CD8-positive, alpha-beta T cell (primary cell): ENCODE measurements at regions of chr19 and their contacts with region 1.

Region 1: GRCh38 chr19:12139885-12140547 is at the start of gene ZNF20:
- DNase-seq: peak; percentile 71 to 92 (median 89)
- ATAC-seq: peak; percentile 86
- H3K4me3 ChIP-seq: peak within 1 kb of the TSS; percentile 85 to 94
- H3K4me3 Mint-ChIP-seq: peak within 1 kb of the TSS; percentile 84
- H3K27ac ChIP-seq: peak within 1 kb of the TSS; percentile 44 to 50
- H3K27ac Mint-ChIP-seq: peak within 1 kb of the TSS; percentile 67
- H3K4me1 ChIP-seq: peaks cover 16% of the 10 kb centered on the region
- H3K4me1 Mint-ChIP-seq: peaks cover 30% of the 10 kb centered on the region
- H3K27me3 ChIP-seq: no peaks in the 10 kb centered on the region
- H3K27me3 Mint-ChIP-seq: no peaks in the 10 kb centered on the region
- CTCF ChIP-seq: no peak
- total RNA-seq, gene ZNF20: 0.95 to 1.00 TPM

Region 2: GRCh38 chr19:11699931-11700794 is 439.9 kb before region 1 on chr19:
- CTCF ChIA-PET with region 1: no interaction called
- POLR2A ChIA-PET with region 1: no interaction called
- intact Hi-C with region 1: loop called in 1 of 2 experiments (anchors 1 kb)
- DNase-seq: peak in 3 of 9 experiments; percentile 5 to 48 (median 32)
- ATAC-seq: no peak
- H3K4me3 ChIP-seq: no peak overlapping the region
- H3K4me3 Mint-ChIP-seq: no peak overlapping the region
- H3K27ac ChIP-seq: no peak overlapping the region
- H3K27ac Mint-ChIP-seq: no peak overlapping the region
- H3K4me1 ChIP-seq: peaks cover 1% of the 10 kb centered on the region
- H3K4me1 Mint-ChIP-seq: no peaks in the 10 kb centered on the region
- H3K27me3 ChIP-seq: peaks cover 0 to 2% of the 10 kb centered on the region in 2 experiments
- H3K27me3 Mint-ChIP-seq: peaks cover 8% of the 10 kb centered on the region
- CTCF ChIP-seq: peak; percentile 69

Region 3: GRCh38 chr19:11881151-11881800 is 258.7 kb before region 1 on chr19:
- CTCF ChIA-PET with region 1: interaction called, 24 read pairs
- POLR2A ChIA-PET with region 1: no interaction called
- intact Hi-C with region 1: loop called (anchors 1 kb)
- DNase-seq: peak; percentile 33 to 79 (median 66)
- ATAC-seq: peak; percentile 62
- H3K4me3 ChIP-seq: peak overlapping the region in 1 of 2 experiments; percentile 33
- H3K4me3 Mint-ChIP-seq: no peak overlapping the region
- H3K27ac ChIP-seq: no peak overlapping the region
- H3K27ac Mint-ChIP-seq: no peak overlapping the region
- H3K4me1 ChIP-seq: peaks cover 3% of the 10 kb centered on the region
- H3K4me1 Mint-ChIP-seq: peaks cover 2% of the 10 kb centered on the region
- H3K27me3 ChIP-seq: no peaks in the 10 kb centered on the region
- H3K27me3 Mint-ChIP-seq: no peaks in the 10 kb centered on the region
- CTCF ChIP-seq: peak; percentile 53

Region 4: DNA sequence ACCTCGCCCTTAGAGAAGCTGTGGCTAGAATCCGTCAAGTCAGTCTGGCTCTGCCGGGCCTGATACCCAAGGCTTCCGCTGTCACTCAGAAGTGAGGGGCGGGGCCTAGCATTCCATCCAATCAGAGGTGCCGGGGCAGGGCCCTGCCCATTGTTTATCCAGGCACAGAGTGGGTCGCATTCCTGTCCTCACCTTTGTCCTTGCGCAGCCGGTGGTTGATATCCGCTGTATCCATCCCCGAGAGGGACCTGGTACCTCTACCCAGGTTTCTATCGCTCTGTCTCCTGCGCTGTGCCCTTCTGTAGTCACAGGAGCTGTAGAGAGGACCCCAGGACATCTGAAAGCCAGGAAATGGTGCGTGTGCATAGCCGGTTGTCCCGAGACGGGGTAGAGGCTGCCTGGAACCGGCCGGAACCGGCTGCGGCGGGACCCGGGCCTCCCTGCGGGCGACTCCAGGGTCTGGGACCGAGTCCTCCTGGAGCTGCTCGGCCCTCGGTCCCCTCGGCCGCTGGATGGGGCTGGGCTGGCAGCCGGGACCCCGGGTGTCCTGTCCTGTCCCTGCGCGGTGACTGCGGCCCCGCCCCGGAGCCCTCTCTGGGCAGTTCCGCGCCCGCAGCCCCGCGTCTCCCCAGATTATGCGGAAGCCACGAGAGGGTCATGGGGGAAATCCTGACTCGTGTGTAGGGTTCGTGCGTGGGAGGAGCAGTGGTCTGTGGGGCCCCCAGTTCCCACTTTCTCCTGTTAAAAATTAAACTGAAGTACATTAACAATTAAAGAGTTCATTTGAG is 175.0 kb before region 1 on chr19 and contains the start of gene ZNF763:
- CTCF ChIA-PET with region 1: interaction called, 22 read pairs
- POLR2A ChIA-PET with region 1: no interaction called
- intact Hi-C with region 1: loop called (anchors 1 kb)
- DNase-seq: peak; percentile 73 to 93 (median 89)
- ATAC-seq: peak; percentile 93
- H3K4me3 ChIP-seq: peak within 1 kb of the TSS; percentile 69 to 93
- H3K4me3 Mint-ChIP-seq: peak within 1 kb of the TSS; percentile 97
- H3K27ac ChIP-seq: peak within 1 kb of the TSS; percentile 80 to 96
- H3K27ac Mint-ChIP-seq: peak within 1 kb of the TSS; percentile 98
- H3K4me1 ChIP-seq: peaks cover 13% of the 10 kb centered on the region
- H3K4me1 Mint-ChIP-seq: peaks cover 30% of the 10 kb centered on the region
- H3K27me3 ChIP-seq: no peaks in the 10 kb centered on the region
- H3K27me3 Mint-ChIP-seq: no peaks in the 10 kb centered on the region
- CTCF ChIP-seq: no peak
- total RNA-seq, gene ZNF763: 1.5 to 1.8 TPM

Region 5: DNA sequence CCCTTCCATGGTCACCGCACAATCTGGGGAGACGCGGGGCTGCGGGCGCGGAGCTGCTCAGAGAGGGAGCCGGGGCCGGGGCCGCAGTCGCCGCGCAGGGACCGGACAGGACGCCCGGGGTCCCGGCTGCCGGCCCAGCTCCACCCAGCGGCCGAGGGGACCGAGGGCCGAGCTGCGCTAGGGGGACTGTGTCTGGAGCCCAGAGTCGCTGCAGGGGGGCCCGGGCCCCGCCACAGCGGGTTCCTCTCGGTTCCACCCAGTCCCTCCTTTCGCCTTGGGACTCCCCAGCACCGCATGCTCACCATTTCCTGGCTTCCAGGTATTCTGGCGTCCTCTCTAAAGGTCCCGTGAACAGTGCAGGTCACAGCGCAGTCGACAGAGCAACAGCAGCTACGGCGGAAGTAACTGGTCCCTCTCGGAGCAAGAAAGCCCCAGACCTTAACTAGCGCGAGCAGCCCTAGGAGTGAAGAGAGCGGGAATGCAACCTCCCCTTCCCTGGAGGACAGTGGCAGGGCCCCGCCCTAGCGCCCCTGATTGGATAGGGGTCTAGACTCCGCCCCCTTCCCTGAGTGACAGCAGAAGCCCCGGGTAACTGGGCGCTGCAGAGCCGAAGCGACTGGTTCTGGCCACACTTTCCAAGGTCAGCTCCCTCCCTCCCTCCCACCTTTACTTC is 87.4 kb before region 1 on chr19 and contains the start of gene ZNF878:
- CTCF ChIA-PET with region 1: interaction called, 10 read pairs
- POLR2A ChIA-PET with region 1: no interaction called
- intact Hi-C with region 1: no loop called
- DNase-seq: peak in 8 of 9 experiments; percentile 19 to 65 (median 42)
- ATAC-seq: peak; percentile 72
- H3K4me3 ChIP-seq: peak within 1 kb of the TSS; percentile 59 to 75
- H3K4me3 Mint-ChIP-seq: peak within 1 kb of the TSS; percentile 84
- H3K27ac ChIP-seq: no peak within 1 kb of the TSS
- H3K27ac Mint-ChIP-seq: peak within 1 kb of the TSS; percentile 37
- H3K4me1 ChIP-seq: peaks cover 10% of the 10 kb centered on the region
- H3K4me1 Mint-ChIP-seq: peaks cover 15% of the 10 kb centered on the region
- H3K27me3 ChIP-seq: no peaks in the 10 kb centered on the region
- H3K27me3 Mint-ChIP-seq: peaks cover 12% of the 10 kb centered on the region
- CTCF ChIP-seq: no peak
- total RNA-seq, gene ZNF878: not detected

Region 6: GRCh38 chr19:12092065-12092867 is 47.8 kb before region 1 on chr19:
- CTCF ChIA-PET with region 1: interaction called, 15 read pairs
- POLR2A ChIA-PET with region 1: interaction called, 8 read pairs
- intact Hi-C with region 1: loop called (anchors 1 kb)
- DNase-seq: peak in 8 of 9 experiments; percentile 15 to 70 (median 42)
- ATAC-seq: peak; percentile 72
- H3K4me3 ChIP-seq: peak overlapping the region; percentile 37 to 55
- H3K4me3 Mint-ChIP-seq: peak overlapping the region; percentile 77
- H3K27ac ChIP-seq: no peak overlapping the region
- H3K27ac Mint-ChIP-seq: no peak overlapping the region
- H3K4me1 ChIP-seq: peaks cover 11% of the 10 kb centered on the region
- H3K4me1 Mint-ChIP-seq: peaks cover 13% of the 10 kb centered on the region
- H3K27me3 ChIP-seq: peaks cover 0 to 2% of the 10 kb centered on the region in 2 experiments
- H3K27me3 Mint-ChIP-seq: peaks cover 10% of the 10 kb centered on the region
- CTCF ChIP-seq: no peak

Region 7: GRCh38 chr19:12155324-12155860 is 15.4 kb after region 1 on chr19:
- CTCF ChIA-PET with region 1: interaction called, 22 read pairs
- POLR2A ChIA-PET with region 1: no interaction called
- intact Hi-C with region 1: no loop called
- DNase-seq: no peak
- ATAC-seq: no peak
- H3K4me3 ChIP-seq: peak overlapping the region; percentile 75 to 84
- H3K4me3 Mint-ChIP-seq: peak overlapping the region; percentile 74
- H3K27ac ChIP-seq: no peak overlapping the region
- H3K27ac Mint-ChIP-seq: peak overlapping the region; percentile 8
- H3K4me1 ChIP-seq: peaks cover 17% of the 10 kb centered on the region
- H3K4me1 Mint-ChIP-seq: peaks cover 18% of the 10 kb centered on the region
- H3K27me3 ChIP-seq: no peaks in the 10 kb centered on the region
- H3K27me3 Mint-ChIP-seq: peaks cover 4% of the 10 kb centered on the region
- CTCF ChIP-seq: no peak